ENCODE measurements at regions of chr19 and their contacts with region 1.

Region 1: DNA sequence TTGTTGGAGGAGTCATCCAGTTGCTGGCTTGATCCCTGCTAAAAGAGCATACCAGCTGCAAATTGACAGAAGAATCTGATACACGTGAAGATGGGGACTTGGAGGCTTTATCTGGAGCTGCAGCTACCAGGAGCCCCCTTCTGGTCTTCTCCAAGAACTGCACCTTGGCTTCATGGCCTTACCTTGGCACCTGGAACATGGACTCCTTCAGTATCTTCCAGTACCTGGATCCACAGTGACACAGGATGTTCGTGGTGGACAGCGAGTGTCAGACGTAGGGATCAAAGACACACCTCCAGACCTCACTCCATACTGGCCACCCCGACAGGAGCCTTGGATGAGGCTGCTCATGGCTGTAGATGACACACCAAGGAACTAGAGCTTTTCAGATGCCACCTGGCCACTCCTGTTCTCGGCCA is 9.9 kb upstream of the ACSBG2 start:
- DNase-seq: peak; percentile 75
- H3K4me3 ChIP-seq: no peak overlapping the region
- H3K27ac ChIP-seq: no peak overlapping the region
- H3K4me1 ChIP-seq: no peaks in the 10 kb centered on the region
- H3K27me3 ChIP-seq: no peaks in the 10 kb centered on the region
- CTCF ChIP-seq: peak; percentile 91 to 95
- POLR2A ChIP-seq: no peak

Region 2: DNA sequence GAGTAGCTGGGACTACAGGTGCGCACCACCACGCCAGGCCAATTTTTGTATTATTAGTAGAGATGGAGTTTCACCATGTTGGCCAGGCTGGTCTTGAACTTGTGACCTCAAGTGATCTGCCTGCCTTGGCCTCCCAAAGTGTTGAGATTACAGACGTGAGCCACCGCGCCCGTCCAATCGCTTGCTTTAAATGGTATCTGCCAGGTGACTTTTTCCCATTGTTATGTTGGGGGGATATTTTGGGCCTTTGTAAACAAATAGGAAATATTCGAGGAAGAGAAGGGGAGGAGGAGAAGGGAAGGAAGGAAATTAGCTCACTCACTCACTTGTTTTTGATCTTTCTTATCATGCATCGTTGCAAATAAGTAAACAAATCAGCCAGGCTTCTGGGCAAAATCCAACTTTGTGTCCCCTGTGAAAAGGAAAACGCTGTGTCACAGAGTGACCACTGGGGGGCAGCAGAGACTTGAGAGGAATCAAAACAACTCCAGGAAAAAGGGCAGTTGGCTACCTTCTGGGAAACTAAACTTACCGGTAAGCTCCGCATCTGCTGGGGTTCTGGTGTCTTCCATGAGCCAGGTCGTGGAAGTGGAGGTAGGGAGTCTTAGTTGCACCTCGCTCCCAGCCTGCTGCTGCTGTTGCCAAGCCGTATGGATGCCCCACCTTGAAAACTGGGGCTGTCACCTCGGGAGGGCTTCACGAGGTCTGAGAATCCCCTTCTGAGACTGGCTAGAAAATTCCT is 138.3 kb before region 1 on chr19:
- CTCF ChIA-PET with region 1: interaction called, 15 read pairs
- POLR2A ChIA-PET with region 1: no interaction called
- dilution Hi-C with region 1: no loop called
- intact Hi-C with region 1: loop called (anchors 1 kb)
- DNase-seq: peak; percentile 86
- H3K4me3 ChIP-seq: no peak overlapping the region
- H3K27ac ChIP-seq: no peak overlapping the region
- H3K4me1 ChIP-seq: peaks cover 17% of the 10 kb centered on the region
- H3K27me3 ChIP-seq: no peaks in the 10 kb centered on the region
- CTCF ChIP-seq: peak; percentile 86 to 94
- POLR2A ChIP-seq: no peak

Region 3: GRCh38 chr19:6005321-6006069 is 120.1 kb before region 1 on chr19:
- CTCF ChIA-PET with region 1: no interaction called
- POLR2A ChIA-PET with region 1: no interaction called
- dilution Hi-C with region 1: no loop called
- intact Hi-C with region 1: no loop called
- DNase-seq: no peak
- H3K4me3 ChIP-seq: no peak overlapping the region
- H3K27ac ChIP-seq: no peak overlapping the region
- H3K4me1 ChIP-seq: no peaks in the 10 kb centered on the region
- H3K27me3 ChIP-seq: no peaks in the 10 kb centered on the region
- CTCF ChIP-seq: no peak
- POLR2A ChIP-seq: no peak

Region 4: DNA sequence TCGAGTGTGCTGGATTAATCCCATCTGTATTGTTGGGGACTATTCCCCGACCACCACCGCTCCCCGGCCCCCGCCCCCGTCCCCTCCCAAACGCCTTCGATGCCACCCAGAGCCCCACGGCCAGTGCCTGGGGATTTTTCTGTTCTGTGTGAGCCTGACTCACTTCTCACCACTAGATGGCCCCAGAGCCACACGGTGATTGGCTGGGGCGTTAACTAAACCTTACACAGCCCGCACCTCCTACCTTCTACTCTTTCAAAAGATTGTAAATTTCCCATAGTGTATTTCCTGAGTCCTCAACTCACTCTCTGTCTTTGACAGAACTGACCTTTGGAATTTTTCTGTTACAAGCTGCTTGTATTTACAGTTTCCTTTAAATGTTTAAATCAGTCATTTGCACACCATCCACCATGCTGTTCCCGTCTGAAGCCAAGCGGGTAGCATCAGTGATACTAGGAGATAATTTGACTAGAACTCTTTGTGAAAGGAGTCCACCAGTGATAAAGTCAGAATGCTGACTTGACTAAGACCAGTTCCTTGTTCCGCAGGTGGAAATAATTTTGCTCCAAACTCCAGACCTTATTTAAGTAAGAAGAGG is 76.7 kb before region 1 on chr19:
- CTCF ChIA-PET with region 1: interaction called, 340 read pairs
- POLR2A ChIA-PET with region 1: no interaction called
- dilution Hi-C with region 1: loop called (anchors 25 kb)
- intact Hi-C with region 1: loop called (anchors 1 kb)
- DNase-seq: peak; percentile 77
- H3K4me3 ChIP-seq: no peak overlapping the region
- H3K27ac ChIP-seq: peak overlapping the region; percentile 20
- H3K4me1 ChIP-seq: peaks cover 4% of the 10 kb centered on the region
- H3K27me3 ChIP-seq: no peaks in the 10 kb centered on the region
- CTCF ChIP-seq: peak; percentile 61 to 83
- POLR2A ChIP-seq: no peak

Region 5: DNA sequence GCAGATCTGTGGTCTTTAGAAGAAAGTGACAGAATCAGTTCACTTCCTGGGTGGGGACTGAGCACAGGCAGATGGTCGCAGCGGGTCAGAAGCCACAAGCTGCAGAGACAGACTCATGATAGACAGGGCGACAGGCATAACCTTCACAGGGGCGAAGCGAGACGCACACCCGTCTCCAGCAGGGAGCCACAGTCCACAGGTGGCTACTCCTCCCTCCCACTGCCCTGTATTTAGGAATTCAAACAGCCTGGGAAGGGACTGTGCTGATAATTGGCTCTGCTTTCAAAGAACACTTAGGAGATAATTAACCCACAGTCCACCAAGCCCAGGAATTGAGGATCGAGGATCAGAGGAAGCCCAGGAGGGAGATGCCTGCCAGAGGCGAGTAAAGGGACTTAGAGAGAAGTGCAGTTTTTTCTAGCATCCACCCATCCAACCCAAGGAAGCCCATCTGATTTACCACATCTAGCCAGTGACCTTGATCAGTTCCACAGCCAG is 38.5 kb before region 1 on chr19:
- CTCF ChIA-PET with region 1: interaction called, 13 read pairs
- POLR2A ChIA-PET with region 1: interaction called, 4 read pairs
- dilution Hi-C with region 1: no loop called
- intact Hi-C with region 1: loop called (anchors 1 kb)
- DNase-seq: no peak
- H3K4me3 ChIP-seq: no peak overlapping the region
- H3K27ac ChIP-seq: peak overlapping the region; percentile 78
- H3K4me1 ChIP-seq: peaks cover 43% of the 10 kb centered on the region
- H3K27me3 ChIP-seq: no peaks in the 10 kb centered on the region
- CTCF ChIP-seq: no peak
- POLR2A ChIP-seq: no peak

Region 6: DNA sequence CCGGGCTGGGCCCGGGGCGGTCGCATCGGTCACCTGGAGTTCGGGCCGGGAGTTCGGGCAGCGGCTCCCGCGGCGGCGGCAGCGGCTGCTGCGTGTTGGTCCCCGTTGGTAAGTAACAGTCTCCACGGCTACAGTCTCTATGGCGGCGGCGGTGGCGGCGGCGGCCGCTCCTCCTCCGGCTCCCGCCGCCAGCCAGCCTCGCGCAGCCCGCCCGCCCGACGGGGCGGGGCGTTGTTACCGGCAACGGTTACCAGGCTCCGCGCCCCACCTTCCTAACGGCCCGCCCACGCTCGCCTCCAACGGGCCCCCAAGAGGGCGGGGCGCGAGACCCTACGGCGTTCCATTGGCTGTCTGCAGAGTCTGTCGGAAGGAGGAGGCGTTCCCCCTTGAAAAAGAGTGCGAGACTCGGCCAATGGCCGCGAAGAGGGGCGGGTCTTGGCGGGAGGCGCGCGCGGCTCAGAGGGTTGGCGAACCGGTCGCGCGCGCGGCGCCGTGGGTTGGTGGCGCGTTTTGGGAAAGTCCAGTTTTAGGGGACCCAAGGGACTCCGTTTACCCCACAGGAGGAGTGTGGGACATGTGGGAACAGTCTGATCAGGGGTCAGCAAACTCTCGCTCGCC is 15.1 kb before region 1 on chr19 and contains the start of gene RFX2:
- CTCF ChIA-PET with region 1: interaction called, 39 read pairs
- POLR2A ChIA-PET with region 1: interaction called, 3 read pairs
- dilution Hi-C with region 1: no loop called
- intact Hi-C with region 1: no loop called
- DNase-seq: peak; percentile 99
- H3K4me3 ChIP-seq: peak within 1 kb of the TSS; percentile 78 to 96 (median 80)
- H3K27ac ChIP-seq: peak within 1 kb of the TSS; percentile 86
- H3K4me1 ChIP-seq: peaks cover 12% of the 10 kb centered on the region
- H3K27me3 ChIP-seq: no peaks in the 10 kb centered on the region
- CTCF ChIP-seq: no peak
- POLR2A ChIP-seq: peak; percentile 52
- total RNA-seq, gene RFX2: 16.1 and 16.2 TPM in 2 replicates

Region 7: GRCh38 chr19:6297202-6297601 is 171.6 kb after region 1 on chr19:
- CTCF ChIA-PET with region 1: interaction called, 10 read pairs
- POLR2A ChIA-PET with region 1: no interaction called
- dilution Hi-C with region 1: no loop called
- intact Hi-C with region 1: loop called (anchors 1 kb)
- DNase-seq: no peak
- H3K4me3 ChIP-seq: no peak overlapping the region
- H3K27ac ChIP-seq: no peak overlapping the region
- H3K4me1 ChIP-seq: no peaks in the 10 kb centered on the region
- H3K27me3 ChIP-seq: no peaks in the 10 kb centered on the region
- CTCF ChIP-seq: no peak
- POLR2A ChIP-seq: no peak

Region 8: GRCh38 chr19:6396305-6396704 is 270.7 kb after region 1 on chr19:
- CTCF ChIA-PET with region 1: no interaction called
- POLR2A ChIA-PET with region 1: no interaction called
- dilution Hi-C with region 1: no loop called
- intact Hi-C with region 1: no loop called
- DNase-seq: no peak
- H3K4me3 ChIP-seq: no peak overlapping the region
- H3K27ac ChIP-seq: no peak overlapping the region
- H3K4me1 ChIP-seq: peaks cover 7% of the 10 kb centered on the region
- H3K27me3 ChIP-seq: no peaks in the 10 kb centered on the region
- CTCF ChIP-seq: no peak
- POLR2A ChIP-seq: no peak

Region 9: DNA sequence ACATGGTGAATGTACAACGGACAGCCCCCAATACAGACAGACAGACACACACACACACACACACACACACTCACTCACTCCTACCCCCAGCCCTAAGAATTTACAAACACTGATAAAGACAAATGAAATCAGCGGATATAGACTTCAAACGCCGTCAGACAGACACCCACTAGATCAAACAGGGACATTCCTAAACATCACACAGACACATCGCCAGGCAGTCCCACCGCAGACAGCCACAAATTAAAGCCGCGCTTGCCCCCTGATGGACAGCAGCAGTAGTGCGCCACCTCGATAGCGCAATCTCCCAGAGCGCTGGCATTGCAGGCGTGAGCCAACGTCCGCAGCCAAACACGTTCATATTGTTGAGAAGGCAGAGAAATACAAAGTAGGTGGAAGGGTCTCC is 737.1 kb after region 1 on chr19:
- CTCF ChIA-PET with region 1: interaction called, 15 read pairs
- POLR2A ChIA-PET with region 1: no interaction called
- dilution Hi-C with region 1: no loop called
- intact Hi-C with region 1: no loop called
- DNase-seq: peak; percentile 78
- H3K4me3 ChIP-seq: no peak overlapping the region
- H3K27ac ChIP-seq: no peak overlapping the region
- H3K4me1 ChIP-seq: no peaks in the 10 kb centered on the region
- H3K27me3 ChIP-seq: no peaks in the 10 kb centered on the region
- CTCF ChIP-seq: peak; percentile 90 to 95
- POLR2A ChIP-seq: no peak